Calu3 (cell line): ENCODE measurements at regions of chr3 and their contacts with region 1.

Region 1: DNA sequence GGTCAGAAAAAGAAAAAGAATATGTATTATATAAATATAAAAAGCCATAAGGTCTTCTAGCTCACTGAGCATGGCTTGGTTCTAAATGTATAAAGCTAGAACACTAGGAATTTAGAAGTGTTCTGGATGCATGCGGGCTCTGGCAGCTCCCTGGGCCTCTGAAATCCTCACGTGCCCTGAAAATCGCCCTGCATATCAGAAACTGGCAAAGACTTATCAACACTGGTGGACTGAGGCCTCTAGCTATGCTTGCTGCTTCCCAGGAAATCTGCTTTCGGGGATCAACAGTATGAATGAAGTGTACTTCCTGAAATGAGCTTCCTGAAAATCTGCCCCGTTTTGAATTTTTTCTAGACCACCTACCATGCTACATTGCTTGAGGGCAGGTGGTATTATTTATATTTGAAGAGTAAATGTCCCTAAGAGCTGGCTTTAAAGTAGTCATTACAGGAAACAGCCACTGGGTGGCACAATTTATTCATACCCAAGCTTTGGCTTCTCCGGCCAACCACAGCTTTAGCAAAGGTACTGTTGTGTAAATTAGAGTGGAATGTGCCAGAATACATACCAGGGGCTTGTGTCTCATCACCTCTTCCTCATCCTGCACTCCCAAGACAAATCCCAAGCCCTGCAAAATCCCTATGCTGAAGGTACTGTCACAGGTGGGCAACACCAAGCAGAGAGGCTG is 17.7 kb downstream of the CRTAP start:
- DNase-seq: peak; percentile 56
- H3K4me3 Mint-ChIP-seq: no peak overlapping the region
- H3K27ac Mint-ChIP-seq: no peak overlapping the region
- H3K4me1 Mint-ChIP-seq: no peaks in the 10 kb centered on the region
- H3K27me3 Mint-ChIP-seq: no peaks in the 10 kb centered on the region
- CTCF ChIP-seq: no peak

Region 2: GRCh38 chr3:33250712-33251111 is 119.2 kb after region 1 on chr3:
- CTCF ChIA-PET with region 1: interaction called, 3 read pairs
- intact Hi-C with region 1: loop called (anchors 2 kb)
- DNase-seq: no peak
- H3K4me3 Mint-ChIP-seq: no peak overlapping the region
- H3K27ac Mint-ChIP-seq: no peak overlapping the region
- H3K4me1 Mint-ChIP-seq: no peaks in the 10 kb centered on the region
- H3K27me3 Mint-ChIP-seq: no peaks in the 10 kb centered on the region
- CTCF ChIP-seq: no peak

Region 3: DNA sequence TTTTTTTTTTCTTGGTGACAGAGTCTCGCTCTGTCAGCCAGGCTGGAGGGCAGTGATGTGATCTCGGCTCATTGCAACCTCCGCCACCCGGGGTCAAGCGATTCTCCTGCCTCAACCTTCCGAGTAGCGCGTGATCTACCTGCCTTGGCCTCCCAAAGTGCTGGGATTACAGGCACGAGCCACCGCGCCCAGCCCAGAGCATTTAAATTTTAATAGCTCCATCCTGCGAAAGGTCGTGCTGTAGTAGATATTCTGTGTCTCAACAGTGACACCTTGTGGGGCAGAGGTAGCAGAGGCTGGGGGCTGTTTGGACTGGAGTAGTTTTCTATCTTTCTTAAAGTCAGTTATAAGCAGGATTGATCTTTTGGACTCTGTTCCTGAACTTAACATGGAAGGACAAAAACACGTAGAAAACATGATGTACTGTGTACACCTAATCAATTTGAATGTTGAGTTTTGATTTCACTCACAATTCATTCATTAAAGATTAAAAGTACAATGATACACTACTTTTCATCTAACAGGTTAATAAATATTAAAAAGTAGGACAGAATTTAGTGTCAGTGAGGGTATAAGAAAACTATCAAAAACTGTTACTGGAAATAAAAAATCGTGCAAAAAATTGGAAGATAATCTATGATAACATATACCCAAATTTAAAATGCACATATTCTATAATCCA is 656.0 kb after region 1 on chr3:
- CTCF ChIA-PET with region 1: interaction called, 9 read pairs
- intact Hi-C with region 1: loop called (anchors 10 kb)
- DNase-seq: peak; percentile 54
- H3K4me3 Mint-ChIP-seq: peak overlapping the region; percentile 34
- H3K27ac Mint-ChIP-seq: no peak overlapping the region
- H3K4me1 Mint-ChIP-seq: peaks cover 9% of the 10 kb centered on the region
- H3K27me3 Mint-ChIP-seq: no peaks in the 10 kb centered on the region
- CTCF ChIP-seq: peak; percentile 33